Activated B cell treated with CpG ODN at 0.5 μM for 24 hours (primary cell): ENCODE measurements at regions of chr19 and their contacts with region 1.

Region 1: DNA sequence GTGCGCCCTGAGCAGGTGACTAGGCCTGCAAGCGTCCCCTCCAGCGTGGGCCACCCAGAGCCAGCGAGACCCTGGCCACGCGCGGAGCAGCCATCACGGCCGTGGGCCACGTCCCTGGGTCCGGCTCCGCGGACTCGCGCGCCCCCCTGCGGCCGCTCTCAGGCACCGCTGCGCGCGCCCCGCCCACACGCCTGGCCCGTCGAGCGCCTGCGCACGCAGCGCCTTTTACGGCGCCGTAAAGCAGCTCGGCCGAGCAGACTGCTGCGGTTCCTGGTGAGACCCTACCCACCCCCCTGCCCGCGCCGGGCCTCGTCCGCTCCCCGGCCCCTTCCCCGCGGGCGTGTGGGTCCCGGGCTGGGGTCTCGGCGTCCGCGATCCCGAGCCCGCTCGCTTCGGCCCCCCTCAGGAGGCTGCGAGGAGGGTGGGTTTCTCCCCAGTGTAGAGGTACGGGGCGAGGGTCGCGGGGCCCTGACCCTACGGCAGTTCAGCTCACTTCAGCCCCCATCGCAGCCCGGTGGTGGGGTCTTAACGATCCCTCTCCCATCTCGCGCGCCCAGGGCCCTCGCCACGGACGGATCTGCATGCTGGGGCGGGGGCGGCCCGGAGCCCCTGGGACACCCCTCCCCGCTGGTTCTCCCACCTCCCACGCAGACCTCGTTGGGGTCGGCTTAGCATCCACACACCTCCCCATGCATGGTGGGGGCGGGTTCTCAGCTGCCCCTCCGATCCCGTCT is at the start of gene TRAPPC5:
- DNase-seq: peak; percentile 91
- ATAC-seq: peak; percentile 53
- H3K4me3 Mint-ChIP-seq: peak within 1 kb of the TSS; percentile 93
- H3K27ac Mint-ChIP-seq: peak within 1 kb of the TSS; percentile 93
- H3K4me1 Mint-ChIP-seq: peaks cover 61% of the 10 kb centered on the region
- H3K27me3 Mint-ChIP-seq: peaks cover 14% of the 10 kb centered on the region
- CTCF ChIP-seq: peak; percentile 78
- total RNA-seq, gene TRAPPC5: 110 and 123 TPM in 2 replicates

Region 2: GRCh38 chr19:7098701-7099596 is 581.8 kb before region 1 on chr19:
- CTCF ChIA-PET with region 1: interaction called, 4 read pairs
- POLR2A ChIA-PET with region 1: no interaction called
- intact Hi-C with region 1: loop called (anchors 2 kb)
- DNase-seq: peak; percentile 86
- ATAC-seq: peak; percentile 92
- H3K4me3 Mint-ChIP-seq: peak overlapping the region; percentile 92
- H3K27ac Mint-ChIP-seq: peak overlapping the region; percentile 95
- H3K4me1 Mint-ChIP-seq: peaks cover 18% of the 10 kb centered on the region
- H3K27me3 Mint-ChIP-seq: no peaks in the 10 kb centered on the region
- CTCF ChIP-seq: no peak

Region 3: DNA sequence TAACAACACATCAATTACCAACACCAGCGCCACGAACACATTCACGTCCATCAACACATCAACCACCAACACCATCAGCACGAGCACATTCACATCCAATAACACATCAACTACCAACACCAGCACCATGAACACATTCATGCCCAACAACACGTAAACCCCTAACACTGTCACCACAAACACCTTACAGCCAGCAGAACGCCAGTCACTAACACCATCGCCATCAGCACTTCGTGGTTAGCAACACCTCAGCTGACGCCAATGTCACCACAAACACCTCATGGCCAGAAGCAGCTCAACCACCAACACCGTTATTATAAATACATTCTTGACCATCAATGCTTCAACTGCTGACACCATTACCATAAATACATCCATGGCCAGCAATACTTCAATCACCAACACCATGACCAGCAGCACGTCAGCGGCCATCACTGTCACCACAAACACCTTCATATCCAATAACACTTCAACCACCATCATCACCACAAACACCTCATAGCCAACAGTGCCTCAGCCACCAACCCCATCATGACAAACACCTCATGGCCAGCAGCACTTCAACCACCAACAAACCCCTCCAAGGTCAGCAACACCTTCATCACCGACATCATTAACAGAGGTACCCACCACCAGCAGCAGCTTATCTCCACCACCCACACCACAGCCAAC is 11.8 kb after region 1 on chr19:
- CTCF ChIA-PET with region 1: interaction called, 48 read pairs
- POLR2A ChIA-PET with region 1: interaction called, 23 read pairs
- intact Hi-C with region 1: loop called (anchors 1 kb)
- DNase-seq: no peak
- ATAC-seq: no peak
- H3K4me3 Mint-ChIP-seq: no peak overlapping the region
- H3K27ac Mint-ChIP-seq: no peak overlapping the region
- H3K4me1 Mint-ChIP-seq: peaks cover 40% of the 10 kb centered on the region
- H3K27me3 Mint-ChIP-seq: no peaks in the 10 kb centered on the region
- CTCF ChIP-seq: no peak

Region 4: GRCh38 chr19:7722231-7722651 is 41.5 kb after region 1 on chr19:
- CTCF ChIA-PET with region 1: interaction called, 9 read pairs
- POLR2A ChIA-PET with region 1: interaction called, 8 read pairs
- intact Hi-C with region 1: loop called (anchors 5 kb)
- DNase-seq: no peak
- ATAC-seq: peak; percentile 67
- H3K4me3 Mint-ChIP-seq: no peak overlapping the region
- H3K27ac Mint-ChIP-seq: peak overlapping the region; percentile 30
- H3K4me1 Mint-ChIP-seq: peaks cover 35% of the 10 kb centered on the region
- H3K27me3 Mint-ChIP-seq: peaks cover under 1% of the 10 kb centered on the region
- CTCF ChIP-seq: no peak

Region 5: GRCh38 chr19:7799640-7800355 is 119.0 kb after region 1 on chr19:
- CTCF ChIA-PET with region 1: interaction called, 64 read pairs
- POLR2A ChIA-PET with region 1: interaction called, 45 read pairs
- intact Hi-C with region 1: loop called (anchors 1 kb)
- DNase-seq: peak; percentile 35
- ATAC-seq: peak; percentile 76
- H3K4me3 Mint-ChIP-seq: peak overlapping the region; percentile 66
- H3K27ac Mint-ChIP-seq: peak overlapping the region; percentile 46
- H3K4me1 Mint-ChIP-seq: peaks cover 13% of the 10 kb centered on the region
- H3K27me3 Mint-ChIP-seq: peaks cover 13% of the 10 kb centered on the region
- CTCF ChIP-seq: no peak

Region 6: GRCh38 chr19:7903244-7904073 is 222.7 kb after region 1 on chr19 and contains the start of gene MAP2K7:
- CTCF ChIA-PET with region 1: interaction called, 3 read pairs
- POLR2A ChIA-PET with region 1: interaction called, 3 read pairs
- intact Hi-C with region 1: loop called (anchors 1 kb)
- DNase-seq: peak; percentile 99
- ATAC-seq: peak; percentile 91
- H3K4me3 Mint-ChIP-seq: peak within 1 kb of the TSS; percentile 89
- H3K27ac Mint-ChIP-seq: peak within 1 kb of the TSS; percentile 91
- H3K4me1 Mint-ChIP-seq: peaks cover 33% of the 10 kb centered on the region
- H3K27me3 Mint-ChIP-seq: no peaks in the 10 kb centered on the region
- CTCF ChIP-seq: no peak
- total RNA-seq, gene MAP2K7: 46.3 and 52.8 TPM in 2 replicates